PC-3 (cell line): ENCODE measurements at regions of chr2 and their contacts with region 1.

Region 1: DNA sequence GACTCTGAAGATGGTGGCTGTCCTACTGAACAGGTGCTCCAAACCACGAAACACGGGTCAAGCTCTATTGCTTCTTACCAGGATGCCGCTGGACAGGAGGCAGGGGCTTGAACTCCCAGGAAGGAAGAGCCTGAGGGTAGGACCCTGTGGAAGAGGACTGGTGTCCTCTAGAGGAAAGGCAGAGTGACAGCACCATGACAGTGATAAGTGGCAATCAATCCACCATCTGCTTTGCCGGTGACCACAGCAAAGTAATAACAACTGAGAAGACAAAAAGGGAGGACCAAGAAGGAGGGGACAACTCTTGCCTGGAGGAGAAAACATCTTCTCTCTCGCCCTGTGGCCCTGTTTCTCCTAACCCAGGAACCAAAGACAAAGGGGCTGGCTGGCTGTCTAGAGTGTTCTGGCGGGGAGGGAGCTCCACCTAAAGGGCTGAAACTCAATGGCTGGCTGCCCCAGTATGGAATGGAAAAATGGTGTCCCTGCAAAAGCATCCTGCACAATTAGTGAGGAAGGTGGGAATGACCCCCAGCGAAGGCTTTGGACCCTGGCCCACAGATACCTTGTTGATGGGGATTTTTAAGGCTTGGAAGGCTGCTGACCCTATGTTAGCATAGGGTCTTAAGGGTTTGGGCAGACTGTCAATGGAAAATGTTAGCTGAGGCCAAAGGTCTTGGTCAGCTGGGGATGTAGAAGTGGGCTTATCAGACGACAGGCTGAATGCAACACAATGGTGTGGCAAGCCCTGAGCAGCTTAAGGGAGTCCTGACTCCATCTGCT is 35.4 kb downstream of the PROC start:
- DNase-seq: peak; percentile 29
- ATAC-seq: peak; percentile 39; the same call in 1 of the 2 replicates
- H3K4me3 ChIP-seq: no peak overlapping the region
- H3K27ac ChIP-seq: no peak overlapping the region
- H3K4me1 ChIP-seq: peaks cover 18% of the 10 kb centered on the region
- H3K27me3 ChIP-seq: no peaks in the 10 kb centered on the region
- CTCF ChIP-seq: peak; percentile 55

Region 2: GRCh38 chr2:127479219-127479825 is 25.7 kb after region 1 on chr2:
- CTCF ChIA-PET with region 1: no interaction called
- POLR2A ChIA-PET with region 1: no interaction called
- intact Hi-C with region 1: loop called (anchors 2 kb)
- DNase-seq: peak; percentile 75
- ATAC-seq: peak; percentile 83
- H3K4me3 ChIP-seq: no peak overlapping the region
- H3K27ac ChIP-seq: no peak overlapping the region
- H3K4me1 ChIP-seq: no peaks in the 10 kb centered on the region
- H3K27me3 ChIP-seq: no peaks in the 10 kb centered on the region
- CTCF ChIP-seq: peak; percentile 90